B cell (primary cell): ENCODE measurements at regions of chr19 and their contacts with region 1.

Region 1: GRCh38 chr19:5622463-5623396 is at the starts of genes SAFB and SAFB2:
- DNase-seq: peak; percentile 100
- ATAC-seq: peak; percentile 81
- H3K4me3 ChIP-seq: peak within 1 kb of the TSS; percentile 94 to 98 (median 98)
- H3K4me3 Mint-ChIP-seq: peak within 1 kb of the TSS; percentile 99
- H3K27ac ChIP-seq: peak within 1 kb of the TSS; percentile 92 to 95
- H3K27ac Mint-ChIP-seq: peak within 1 kb of the TSS; percentile 98
- H3K4me1 ChIP-seq: peaks cover 60 to 68% of the 10 kb centered on the region in 2 donors
- H3K4me1 Mint-ChIP-seq: peaks cover 74% of the 10 kb centered on the region
- H3K27me3 ChIP-seq: no peaks in the 10 kb centered on the region
- H3K27me3 Mint-ChIP-seq: no peaks in the 10 kb centered on the region
- CTCF ChIP-seq: no peak
- total RNA-seq, gene SAFB: 221 and 237 TPM in 2 replicates
- total RNA-seq, gene SAFB2: 242 and 257 TPM in 2 replicates

Region 2: GRCh38 chr19:4723367-4724187 is 899.2 kb before region 1 on chr19 and contains the start of gene DPP9:
- CTCF ChIA-PET with region 1: no interaction called
- POLR2A ChIA-PET with region 1: interaction called, 10 read pairs
- intact Hi-C with region 1: no loop called
- DNase-seq: peak; percentile 100
- ATAC-seq: peak; percentile 94
- H3K4me3 ChIP-seq: peak within 1 kb of the TSS; percentile 71 to 97 (median 91)
- H3K4me3 Mint-ChIP-seq: peak within 1 kb of the TSS; percentile 97
- H3K27ac ChIP-seq: peak within 1 kb of the TSS; percentile 63 to 89
- H3K27ac Mint-ChIP-seq: peak within 1 kb of the TSS; percentile 98
- H3K4me1 ChIP-seq: peaks cover 20 to 26% of the 10 kb centered on the region in 2 donors
- H3K4me1 Mint-ChIP-seq: peaks cover 45% of the 10 kb centered on the region
- H3K27me3 ChIP-seq: no peaks in the 10 kb centered on the region
- H3K27me3 Mint-ChIP-seq: peaks cover 3% of the 10 kb centered on the region
- CTCF ChIP-seq: no peak
- total RNA-seq, gene DPP9: 109 and 115 TPM in 2 replicates

Region 3: GRCh38 chr19:5547881-5548280 is 74.8 kb before region 1 on chr19:
- CTCF ChIA-PET with region 1: no interaction called
- POLR2A ChIA-PET with region 1: no interaction called
- intact Hi-C with region 1: no loop called
- DNase-seq: no peak
- ATAC-seq: no peak
- H3K4me3 ChIP-seq: no peak overlapping the region
- H3K4me3 Mint-ChIP-seq: no peak overlapping the region
- H3K27ac ChIP-seq: no peak overlapping the region
- H3K27ac Mint-ChIP-seq: no peak overlapping the region
- H3K4me1 ChIP-seq: no peaks in the 10 kb centered on the region
- H3K4me1 Mint-ChIP-seq: no peaks in the 10 kb centered on the region
- H3K27me3 ChIP-seq: no peaks in the 10 kb centered on the region
- H3K27me3 Mint-ChIP-seq: peaks cover 3% of the 10 kb centered on the region
- CTCF ChIP-seq: no peak

Region 4: DNA sequence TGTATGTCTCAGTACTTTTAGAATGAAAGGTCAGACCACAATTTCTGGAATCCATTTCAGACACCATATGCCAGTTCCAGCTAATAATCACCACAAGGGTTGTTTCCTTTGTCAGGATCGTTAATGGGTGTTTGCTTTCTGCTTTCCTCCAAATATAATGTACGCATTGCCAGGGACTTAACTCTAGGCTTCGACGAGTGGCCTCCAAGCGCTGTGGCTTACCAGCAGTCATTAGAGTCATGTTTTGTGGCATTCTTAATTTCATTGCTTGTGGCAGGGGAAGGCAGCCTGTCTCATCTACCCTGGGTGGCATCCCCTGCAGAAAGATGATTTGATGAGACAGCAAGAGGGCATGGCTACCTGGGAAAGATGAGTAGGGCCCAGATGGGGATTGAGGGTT is 22.7 kb after region 1 on chr19:
- CTCF ChIA-PET with region 1: no interaction called
- POLR2A ChIA-PET with region 1: interaction called, 10 read pairs
- intact Hi-C with region 1: no loop called
- DNase-seq: no peak
- ATAC-seq: no peak
- H3K4me3 ChIP-seq: no peak overlapping the region
- H3K4me3 Mint-ChIP-seq: no peak overlapping the region
- H3K27ac ChIP-seq: no peak overlapping the region
- H3K27ac Mint-ChIP-seq: no peak overlapping the region
- H3K4me1 ChIP-seq: no peaks in the 10 kb centered on the region
- H3K4me1 Mint-ChIP-seq: peaks cover 9% of the 10 kb centered on the region
- H3K27me3 ChIP-seq: no peaks in the 10 kb centered on the region
- H3K27me3 Mint-ChIP-seq: no peaks in the 10 kb centered on the region
- CTCF ChIP-seq: no peak

Region 5: GRCh38 chr19:5690125-5690954 is 67.6 kb after region 1 on chr19 and contains the start of gene RPL36:
- CTCF ChIA-PET with region 1: interaction called, 7 read pairs
- POLR2A ChIA-PET with region 1: interaction called, 13 read pairs
- intact Hi-C with region 1: no loop called
- DNase-seq: peak; percentile 99
- ATAC-seq: peak; percentile 52
- H3K4me3 ChIP-seq: peak within 1 kb of the TSS; percentile 27 to 98 (median 93)
- H3K4me3 Mint-ChIP-seq: peak within 1 kb of the TSS; percentile 94
- H3K27ac ChIP-seq: peak within 1 kb of the TSS; percentile 88 to 89
- H3K27ac Mint-ChIP-seq: peak within 1 kb of the TSS; percentile 93
- H3K4me1 ChIP-seq: peaks cover 14 to 39% of the 10 kb centered on the region in 2 donors
- H3K4me1 Mint-ChIP-seq: peaks cover 43% of the 10 kb centered on the region
- H3K27me3 ChIP-seq: no peaks in the 10 kb centered on the region
- H3K27me3 Mint-ChIP-seq: no peaks in the 10 kb centered on the region
- CTCF ChIP-seq: peak; percentile 94
- total RNA-seq, gene RPL36: 895 and 983 TPM in 2 replicates

Region 6: DNA sequence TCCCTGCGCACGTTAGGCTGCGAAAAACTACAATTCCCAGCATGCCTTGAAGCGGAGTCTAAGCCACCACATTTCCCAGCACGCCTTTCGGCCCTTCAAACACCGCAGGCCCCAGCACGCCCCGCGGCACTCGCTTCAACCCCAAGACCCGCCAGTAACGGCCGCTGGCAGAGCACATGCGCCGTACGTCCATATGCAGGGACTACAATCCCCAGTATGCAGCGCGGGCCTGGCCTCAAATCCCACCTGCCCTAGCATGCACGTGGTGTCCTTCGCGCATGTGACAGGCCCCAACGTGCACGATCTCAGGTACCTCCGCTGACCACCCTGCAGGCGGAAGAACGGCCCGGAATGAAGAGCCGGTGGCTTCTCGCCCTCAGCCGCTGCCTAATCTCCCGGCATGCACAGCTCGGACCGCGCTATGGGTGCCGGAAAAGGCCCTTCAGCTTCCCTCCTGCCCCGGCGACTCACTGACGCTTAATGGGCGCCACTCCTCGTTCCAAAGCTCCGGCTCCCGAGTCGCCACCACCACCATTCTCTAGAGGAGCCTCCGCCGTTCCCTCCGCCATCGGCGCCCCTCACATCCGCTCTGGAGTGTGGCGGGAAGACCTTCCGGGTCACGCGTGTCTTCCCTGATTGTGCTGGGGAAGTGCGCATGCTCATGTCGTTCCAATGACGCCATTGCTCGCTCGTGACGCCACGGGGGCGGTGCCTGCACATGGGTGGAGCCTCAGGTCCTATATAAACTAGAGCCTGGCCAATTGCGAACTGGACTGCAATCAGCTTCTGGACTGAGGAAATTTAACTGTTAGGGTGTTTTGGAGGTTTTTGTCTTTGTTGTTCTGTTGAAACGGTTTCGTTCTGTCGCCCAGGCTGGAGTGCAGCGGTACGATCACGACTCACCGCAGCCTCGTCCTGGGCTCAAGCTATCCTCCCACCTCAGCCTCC is 168.1 kb after region 1 on chr19 and contains the start of gene DUS3L:
- CTCF ChIA-PET with region 1: interaction called, 3 read pairs
- POLR2A ChIA-PET with region 1: no interaction called
- intact Hi-C with region 1: loop called (anchors 2 kb)
- DNase-seq: peak; percentile 97
- ATAC-seq: peak; percentile 92
- H3K4me3 ChIP-seq: peak within 1 kb of the TSS; percentile 67 to 91 (median 87)
- H3K4me3 Mint-ChIP-seq: peak within 1 kb of the TSS; percentile 98
- H3K27ac ChIP-seq: peak within 1 kb of the TSS; percentile 97 to 98
- H3K27ac Mint-ChIP-seq: peak within 1 kb of the TSS; percentile 100
- H3K4me1 ChIP-seq: peaks cover 5 to 16% of the 10 kb centered on the region in 2 donors
- H3K4me1 Mint-ChIP-seq: peaks cover 10% of the 10 kb centered on the region
- H3K27me3 ChIP-seq: peaks cover 0 to 6% (median 0%) of the 10 kb centered on the region in 4 experiments
- H3K27me3 Mint-ChIP-seq: no peaks in the 10 kb centered on the region
- CTCF ChIP-seq: no peak
- total RNA-seq, gene DUS3L: 79.0 and 84.6 TPM in 2 replicates